Activated CD4-positive, alpha-beta T cell treated with anti-CD3 and anti-CD28 coated beads, Interleukin-2, amount 10 ng/mL, durations not matched to agents 24 days and 14 days (primary cell): ENCODE measurements at regions of chr2 and their contacts with region 1.

Region 1: GRCh38 chr2:181953881-181954537 is 31.6 kb upstream of the PPP1R1C start:
- DNase-seq: peak; percentile 88
- H3K4me3 Mint-ChIP-seq: peak overlapping the region; percentile 74
- H3K27ac Mint-ChIP-seq: no peak overlapping the region
- H3K4me1 Mint-ChIP-seq: peaks cover 19% of the 10 kb centered on the region
- H3K27me3 Mint-ChIP-seq: peaks cover 29% of the 10 kb centered on the region

Region 2: GRCh38 chr2:181077128-181077709 is 876.8 kb before region 1 on chr2:
- intact Hi-C with region 1: loop called (anchors 1 kb)
- DNase-seq: peak; percentile 84
- H3K4me3 Mint-ChIP-seq: no peak overlapping the region
- H3K27ac Mint-ChIP-seq: no peak overlapping the region
- H3K4me1 Mint-ChIP-seq: peaks cover 2% of the 10 kb centered on the region
- H3K27me3 Mint-ChIP-seq: no peaks in the 10 kb centered on the region

Region 3: GRCh38 chr2:181742922-181743722 is 210.9 kb before region 1 on chr2:
- intact Hi-C with region 1: loop called (anchors 1 kb)
- DNase-seq: peak; percentile 74
- H3K4me3 Mint-ChIP-seq: no peak overlapping the region
- H3K27ac Mint-ChIP-seq: no peak overlapping the region
- H3K4me1 Mint-ChIP-seq: peaks cover 3% of the 10 kb centered on the region
- H3K27me3 Mint-ChIP-seq: peaks cover 23% of the 10 kb centered on the region

Region 4: DNA sequence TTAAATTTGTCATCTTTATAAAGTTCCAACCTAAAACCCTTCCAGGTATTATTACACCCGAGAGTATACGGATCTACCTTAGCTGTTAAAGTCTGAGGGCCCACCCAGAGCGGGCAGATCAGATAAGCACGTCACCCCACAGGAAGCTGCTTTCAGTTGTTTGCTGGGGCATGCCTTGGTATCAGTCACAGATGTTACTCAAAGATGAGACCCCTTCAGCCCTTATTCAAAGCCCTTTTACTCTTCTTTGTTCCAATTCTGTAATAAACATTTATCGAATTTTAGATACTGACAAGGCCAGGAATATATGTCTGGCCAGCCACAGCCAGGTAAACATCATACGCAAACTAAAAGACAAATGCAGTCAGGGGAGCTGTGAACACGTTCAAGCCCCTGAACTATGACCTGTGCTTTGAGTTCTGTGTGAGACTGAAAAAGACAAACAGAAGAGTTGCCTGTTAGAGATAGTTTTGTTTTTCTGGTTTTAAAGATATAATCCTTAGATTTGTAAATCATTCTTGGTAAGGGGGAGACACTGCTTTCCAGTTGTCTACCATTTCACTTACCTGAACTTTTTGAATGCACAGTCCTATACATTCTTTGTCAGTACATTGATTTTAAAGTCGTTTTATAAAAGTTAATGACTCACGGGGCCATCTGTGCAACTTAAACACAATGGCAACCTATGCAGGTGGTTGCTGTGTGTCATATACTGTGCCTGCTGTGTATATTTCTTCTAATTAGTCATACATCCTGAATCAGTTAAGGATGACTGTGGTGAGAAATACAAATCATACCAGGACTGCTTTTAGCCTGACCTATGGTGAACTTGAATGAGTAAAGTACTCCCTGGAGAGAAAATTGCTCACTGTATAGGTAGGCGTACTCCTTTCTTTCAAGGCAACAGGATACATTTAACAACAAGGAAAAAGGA is 163.0 kb before region 1 on chr2:
- intact Hi-C with region 1: loop called (anchors 2 kb)
- DNase-seq: peak; percentile 62
- H3K4me3 Mint-ChIP-seq: peak overlapping the region; percentile 28
- H3K27ac Mint-ChIP-seq: peak overlapping the region; percentile 79
- H3K4me1 Mint-ChIP-seq: peaks cover 25% of the 10 kb centered on the region
- H3K27me3 Mint-ChIP-seq: no peaks in the 10 kb centered on the region

Region 5: DNA sequence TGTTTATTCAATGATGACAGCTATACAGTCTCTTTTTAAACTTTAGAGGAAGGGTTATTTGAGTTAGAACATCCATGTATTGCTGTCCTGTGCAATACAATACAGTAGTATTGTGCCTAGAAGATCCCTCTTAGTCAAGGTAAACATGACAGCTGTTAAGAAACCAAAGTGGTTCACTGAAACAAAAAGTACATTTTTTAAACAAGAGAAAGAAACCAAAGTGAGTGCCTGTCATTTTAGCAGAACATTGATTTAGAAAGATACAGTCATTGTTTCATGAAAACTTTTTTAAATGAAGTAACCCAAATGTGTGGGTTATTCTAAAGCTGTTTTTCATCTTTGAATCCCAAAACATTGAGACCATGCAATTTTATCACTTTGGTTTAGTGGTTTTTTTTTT is 47.0 kb before region 1 on chr2:
- intact Hi-C with region 1: no loop called
- DNase-seq: no peak
- H3K4me3 Mint-ChIP-seq: no peak overlapping the region
- H3K27ac Mint-ChIP-seq: no peak overlapping the region
- H3K4me1 Mint-ChIP-seq: peaks cover 15% of the 10 kb centered on the region
- H3K27me3 Mint-ChIP-seq: no peaks in the 10 kb centered on the region